OCI-LY7 (cell line): ENCODE measurements at regions of chr1 and their contacts with region 1.

Region 1: DNA sequence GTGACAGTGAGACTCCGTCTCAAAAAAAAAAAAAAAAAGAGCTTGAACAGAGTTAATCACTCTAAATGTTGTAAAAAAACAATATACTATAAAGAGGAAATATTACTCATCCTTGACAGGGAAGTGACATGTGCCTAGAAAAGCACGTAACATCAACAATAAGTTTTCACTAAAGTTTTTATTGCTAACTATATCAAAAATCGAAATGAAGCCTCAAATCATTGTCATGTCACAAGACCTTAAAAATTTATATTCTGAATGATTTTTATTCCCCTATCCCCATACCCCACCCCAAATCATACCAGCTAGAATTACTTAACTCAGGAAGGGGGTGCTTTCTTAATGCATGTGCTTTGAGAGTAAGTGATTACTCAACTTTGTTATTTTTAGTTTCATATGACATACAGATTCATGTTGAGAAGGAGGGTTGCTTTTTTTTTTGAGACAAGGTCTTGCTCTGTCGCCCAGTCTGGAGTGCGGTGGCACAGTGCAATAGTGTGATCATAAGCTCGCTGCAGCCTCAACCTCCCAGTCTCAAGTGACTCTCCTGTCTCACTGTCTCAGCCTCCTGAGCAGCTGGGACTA is 53.6 kb upstream of the MUTYH start:
- DNase-seq: peak; percentile 82
- H3K4me3 ChIP-seq: peak overlapping the region; percentile 56
- H3K27ac ChIP-seq: peak overlapping the region; percentile 91
- H3K4me1 ChIP-seq: peaks cover 51% of the 10 kb centered on the region
- CTCF ChIP-seq: no peak

Region 2: GRCh38 chr1:45141247-45142003 is 252.4 kb before region 1 on chr1:
- CTCF ChIA-PET with region 1: no interaction called
- POLR2A ChIA-PET with region 1: no interaction called
- intact Hi-C with region 1: no loop called
- DNase-seq: no peak
- H3K4me3 ChIP-seq: no peak overlapping the region
- H3K27ac ChIP-seq: no peak overlapping the region
- H3K4me1 ChIP-seq: no peaks in the 10 kb centered on the region
- CTCF ChIP-seq: no peak

Region 3: DNA sequence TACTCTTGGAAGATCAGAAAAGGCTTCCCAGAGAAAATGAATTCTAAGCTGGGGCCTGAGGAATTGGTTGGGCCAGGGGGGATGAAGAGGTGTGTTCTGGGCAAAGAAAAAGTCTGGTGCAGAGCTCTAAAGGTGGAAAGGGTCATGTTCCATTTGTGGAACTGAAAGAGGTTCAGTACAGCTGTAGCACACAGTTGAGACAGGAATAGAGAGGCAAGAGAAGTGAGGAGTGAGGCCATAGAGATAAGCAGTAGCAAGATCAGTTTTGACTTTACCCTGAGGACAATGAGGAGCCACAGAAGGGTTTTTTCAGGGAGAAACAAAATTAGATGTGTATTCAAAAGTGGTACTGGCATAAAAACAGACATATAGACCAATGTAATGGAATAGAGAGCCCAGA is 23.2 kb before region 1 on chr1:
- CTCF ChIA-PET with region 1: interaction called, 4 read pairs
- POLR2A ChIA-PET with region 1: interaction called, 4 read pairs
- intact Hi-C with region 1: loop called (anchors 2 kb)
- DNase-seq: peak; percentile 64
- H3K4me3 ChIP-seq: peak overlapping the region; percentile 2
- H3K27ac ChIP-seq: peak overlapping the region; percentile 61
- H3K4me1 ChIP-seq: peaks cover 42% of the 10 kb centered on the region
- CTCF ChIP-seq: no peak

Region 4: DNA sequence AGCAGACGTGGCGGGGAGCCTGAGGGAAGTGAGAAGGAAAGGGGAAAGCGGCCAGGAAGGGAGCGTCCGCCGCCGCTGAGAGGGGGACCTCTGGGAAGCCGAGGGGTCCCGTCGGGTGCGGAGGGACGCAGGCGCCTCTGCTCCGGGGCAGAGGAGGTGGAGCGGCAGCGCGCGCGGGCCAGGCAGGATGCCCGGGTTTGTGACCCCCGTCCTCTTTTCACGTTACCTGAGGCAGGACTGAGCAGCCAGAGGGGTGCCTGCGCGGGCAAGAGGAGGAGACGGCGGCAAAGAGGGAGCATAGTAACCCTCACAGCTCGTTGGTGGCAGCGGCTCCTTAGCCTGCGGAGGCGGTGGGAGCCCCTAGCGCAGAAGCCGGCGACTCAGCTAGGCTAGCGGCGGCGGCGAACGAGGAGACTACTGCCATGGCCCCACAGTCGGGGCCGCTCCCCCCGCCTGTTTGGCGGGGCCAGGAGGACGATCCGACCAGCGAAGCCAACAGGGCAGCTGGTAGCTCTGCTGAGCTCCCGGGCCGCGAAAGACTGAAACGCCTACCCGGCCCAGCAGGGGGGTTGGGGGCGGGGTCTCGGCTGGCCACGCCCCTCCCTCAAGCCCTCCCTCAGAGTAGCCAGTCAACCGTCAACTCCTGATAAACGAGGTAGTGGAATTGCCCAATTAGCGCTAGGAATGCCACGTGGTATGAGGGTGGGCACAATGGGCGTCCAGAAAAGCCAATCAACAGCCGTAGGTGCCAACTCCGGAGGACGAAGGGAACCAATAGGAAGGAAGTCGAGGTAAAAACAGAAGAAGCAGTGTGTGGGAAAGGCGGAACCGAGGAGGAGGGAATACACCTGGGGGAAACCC is 97.0 kb after region 1 on chr1 and contains the start of gene TESK2:
- CTCF ChIA-PET with region 1: interaction called, 3 read pairs
- POLR2A ChIA-PET with region 1: interaction called, 9 read pairs
- intact Hi-C with region 1: loop called (anchors 1 kb)
- DNase-seq: peak; percentile 100
- H3K4me3 ChIP-seq: peak within 1 kb of the TSS; percentile 75
- H3K27ac ChIP-seq: peak within 1 kb of the TSS; percentile 15
- H3K4me1 ChIP-seq: peaks cover 32% of the 10 kb centered on the region
- CTCF ChIP-seq: no peak
- total RNA-seq, gene TESK2: 4.9 and 5.0 TPM in 2 replicates